Caco-2 (cell line): ENCODE measurements at regions of chr12 and their contacts with region 1.

Region 1: DNA sequence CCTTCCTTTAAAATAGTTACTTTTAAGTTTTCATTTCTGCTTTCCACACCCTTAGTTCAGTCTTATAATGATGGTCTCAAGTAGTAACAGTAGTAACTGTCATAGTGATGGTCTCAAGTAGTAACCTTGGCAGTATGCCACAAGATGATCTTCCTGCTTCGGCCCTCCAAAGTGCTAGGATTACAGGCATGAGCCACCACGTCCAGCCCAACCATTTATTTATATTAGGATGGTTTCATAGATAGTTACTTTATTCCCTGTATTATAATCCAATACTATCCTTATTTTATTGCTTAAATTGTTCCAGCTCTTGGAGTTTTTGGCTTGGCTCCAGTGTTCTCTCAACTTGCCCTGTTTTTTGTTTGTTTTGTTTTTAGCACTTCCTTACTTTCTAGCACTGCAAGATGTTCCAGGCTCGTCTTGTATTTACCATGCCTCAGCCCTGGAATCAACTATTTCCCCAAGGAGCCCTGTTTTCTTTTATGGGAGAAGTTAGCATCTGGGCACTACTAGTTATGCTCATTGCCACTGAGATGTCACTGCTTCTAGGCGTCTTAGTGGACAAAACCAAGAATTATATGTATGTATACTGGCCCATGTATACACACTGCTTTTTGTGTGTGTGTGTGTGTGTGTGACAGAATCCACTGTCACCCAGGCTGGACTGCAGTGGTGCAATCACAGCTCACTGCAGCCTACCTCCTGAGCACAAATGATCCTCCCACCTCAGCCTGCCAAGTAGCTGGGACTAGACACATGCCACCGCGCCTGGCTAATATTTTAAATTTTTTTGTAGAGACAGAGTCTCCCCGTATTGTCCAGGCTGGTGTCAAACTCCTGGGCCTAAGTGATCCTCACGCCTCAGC is 25.4 kb downstream of the LIMA1 start:
- DNase-seq: no peak
- H3K4me3 ChIP-seq: no peak overlapping the region
- H3K4me3 Mint-ChIP-seq: no peak overlapping the region
- H3K27ac Mint-ChIP-seq: peak overlapping the region; percentile 19
- H3K4me1 ChIP-seq: peaks cover 47% of the 10 kb centered on the region
- H3K4me1 Mint-ChIP-seq: peaks cover 40% of the 10 kb centered on the region
- H3K27me3 ChIP-seq: no peaks in the 10 kb centered on the region
- H3K27me3 Mint-ChIP-seq: no peaks in the 10 kb centered on the region
- CTCF ChIP-seq: no peak

Region 2: DNA sequence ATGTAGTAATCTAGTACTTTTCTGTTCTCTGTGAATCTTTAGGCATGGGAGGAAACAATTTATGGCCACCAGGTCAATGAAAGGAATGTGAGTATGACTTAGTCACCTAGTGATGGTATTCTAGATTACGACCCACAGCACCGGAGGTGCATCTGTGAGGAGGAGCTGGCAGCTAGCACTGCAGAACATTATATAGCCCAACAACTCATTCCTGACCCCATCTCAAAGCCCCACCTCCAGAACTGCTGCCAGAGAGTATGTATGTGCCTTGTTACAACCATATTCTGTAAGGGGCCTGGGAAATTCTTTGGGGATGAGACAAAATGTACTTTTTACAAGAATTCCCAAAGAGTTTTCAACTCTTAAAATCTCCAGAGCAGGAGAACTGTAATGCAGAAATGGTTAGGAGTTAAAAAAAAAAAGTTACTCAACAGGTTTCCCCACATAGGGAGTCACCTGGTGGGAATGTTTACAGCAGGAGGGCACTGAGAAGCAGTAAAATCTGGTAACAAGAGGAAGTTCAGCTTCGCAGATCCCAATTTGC is 55.9 kb before region 1 on chr12:
- CTCF ChIA-PET with region 1: no interaction called
- POLR2A ChIA-PET with region 1: no interaction called
- intact Hi-C with region 1: loop called (anchors 2 kb)
- DNase-seq: peak; percentile 83 to 89
- H3K4me3 ChIP-seq: no peak overlapping the region
- H3K4me3 Mint-ChIP-seq: peak overlapping the region; percentile 74
- H3K27ac Mint-ChIP-seq: peak overlapping the region; percentile 95
- H3K4me1 ChIP-seq: peaks cover 40% of the 10 kb centered on the region
- H3K4me1 Mint-ChIP-seq: peaks cover 34% of the 10 kb centered on the region
- H3K27me3 ChIP-seq: no peaks in the 10 kb centered on the region
- H3K27me3 Mint-ChIP-seq: no peaks in the 10 kb centered on the region
- CTCF ChIP-seq: peak in 1 of 2 experiments; percentile 14

Region 3: GRCh38 chr12:50234347-50234746 is 23.6 kb before region 1 on chr12:
- CTCF ChIA-PET with region 1: no interaction called
- POLR2A ChIA-PET with region 1: interaction called, 11 read pairs
- intact Hi-C with region 1: no loop called
- DNase-seq: no peak
- H3K4me3 ChIP-seq: no peak overlapping the region
- H3K4me3 Mint-ChIP-seq: no peak overlapping the region
- H3K27ac Mint-ChIP-seq: no peak overlapping the region
- H3K4me1 ChIP-seq: peaks cover 6% of the 10 kb centered on the region; the same call in 1 of the 2 replicates
- H3K4me1 Mint-ChIP-seq: peaks cover 5% of the 10 kb centered on the region
- H3K27me3 ChIP-seq: no peaks in the 10 kb centered on the region
- H3K27me3 Mint-ChIP-seq: no peaks in the 10 kb centered on the region
- CTCF ChIP-seq: no peak

Region 4: GRCh38 chr12:50271280-50272247 is 13.6 kb after region 1 on chr12:
- CTCF ChIA-PET with region 1: interaction called, 3 read pairs
- POLR2A ChIA-PET with region 1: no interaction called
- intact Hi-C with region 1: loop called (anchors 2 kb)
- DNase-seq: peak in 1 of 2 experiments; percentile 41
- H3K4me3 ChIP-seq: no peak overlapping the region
- H3K4me3 Mint-ChIP-seq: peak overlapping the region; percentile 44
- H3K27ac Mint-ChIP-seq: peak overlapping the region; percentile 84
- H3K4me1 ChIP-seq: peaks cover 44% of the 10 kb centered on the region
- H3K4me1 Mint-ChIP-seq: peaks cover 31% of the 10 kb centered on the region
- H3K27me3 ChIP-seq: no peaks in the 10 kb centered on the region
- H3K27me3 Mint-ChIP-seq: no peaks in the 10 kb centered on the region
- CTCF ChIP-seq: no peak

Region 5: GRCh38 chr12:50283229-50283923 is 25.5 kb after region 1 on chr12 and contains the start of gene LIMA1:
- CTCF ChIA-PET with region 1: interaction called, 5 read pairs
- POLR2A ChIA-PET with region 1: interaction called, 12 read pairs
- intact Hi-C with region 1: no loop called
- DNase-seq: peak; percentile 95 to 99
- H3K4me3 ChIP-seq: peak within 1 kb of the TSS; percentile 90
- H3K4me3 Mint-ChIP-seq: peak within 1 kb of the TSS; percentile 96
- H3K27ac Mint-ChIP-seq: peak within 1 kb of the TSS; percentile 90
- H3K4me1 ChIP-seq: peaks cover 6% of the 10 kb centered on the region; the same call in 1 of the 2 replicates
- H3K4me1 Mint-ChIP-seq: peaks cover 19% of the 10 kb centered on the region
- H3K27me3 ChIP-seq: no peaks in the 10 kb centered on the region
- H3K27me3 Mint-ChIP-seq: no peaks in the 10 kb centered on the region
- CTCF ChIP-seq: peak; percentile 18 to 46
- total RNA-seq, gene LIMA1: 50.3 and 53.5 TPM in 2 replicates

Region 6: DNA sequence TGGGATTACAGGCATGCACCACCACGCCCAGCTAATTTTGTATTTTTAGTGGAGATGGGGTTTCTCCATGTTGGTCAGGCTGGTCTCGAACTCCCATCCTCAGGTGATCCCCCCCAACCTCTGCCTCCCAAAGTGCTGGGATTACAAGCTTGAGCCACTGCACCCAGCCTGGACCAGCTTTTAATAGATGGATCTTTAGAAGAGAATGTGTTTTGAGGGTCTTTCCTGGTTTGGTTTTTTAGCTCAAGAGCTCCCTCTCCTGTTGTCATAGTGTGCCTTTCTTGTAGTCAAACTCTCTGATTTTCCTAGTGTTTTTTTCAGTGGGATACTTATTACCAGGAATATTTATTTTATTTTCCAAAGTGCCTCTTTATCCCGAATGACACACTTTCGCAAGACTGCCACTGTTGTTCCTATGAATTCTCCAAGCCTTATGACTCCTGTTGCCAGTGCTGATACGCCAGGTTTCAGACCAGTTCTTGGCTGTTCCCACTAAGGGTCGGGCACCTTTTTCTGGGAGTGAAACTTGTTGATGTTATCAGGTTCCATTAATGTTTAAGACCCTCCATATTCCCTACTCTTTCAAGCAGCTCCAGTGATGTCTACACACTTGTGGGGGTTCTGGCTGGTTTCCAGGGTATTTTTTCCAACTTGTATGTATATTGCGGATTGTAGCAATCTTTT is 56.9 kb after region 1 on chr12:
- CTCF ChIA-PET with region 1: interaction called, 12 read pairs
- POLR2A ChIA-PET with region 1: no interaction called
- intact Hi-C with region 1: loop called (anchors 2 kb)
- DNase-seq: peak in 1 of 2 experiments; percentile 56
- H3K4me3 ChIP-seq: no peak overlapping the region
- H3K4me3 Mint-ChIP-seq: no peak overlapping the region
- H3K27ac Mint-ChIP-seq: no peak overlapping the region
- H3K4me1 ChIP-seq: no peaks in the 10 kb centered on the region
- H3K4me1 Mint-ChIP-seq: no peaks in the 10 kb centered on the region
- H3K27me3 ChIP-seq: no peaks in the 10 kb centered on the region
- H3K27me3 Mint-ChIP-seq: no peaks in the 10 kb centered on the region
- CTCF ChIP-seq: peak; percentile 76 to 79